Heart left ventricle (tissue), 16 donors: ENCODE measurements at regions of chr17 and their contacts with region 1.

Region 1: GRCh38 chr17:58172369-58173071 is 5.7 kb downstream of the OR4D2 start:
- DNase-seq: no peak
- ATAC-seq: no peak
- H3K4me3 ChIP-seq: no peak overlapping the region
- H3K27ac ChIP-seq: no peak overlapping the region
- H3K4me1 ChIP-seq: no peaks in the 10 kb centered on the region
- H3K27me3 ChIP-seq: peaks cover 0 to 38% (median 0%) of the 10 kb centered on the region in 9 donors
- CTCF ChIP-seq: peak in 9 of 12 donors; percentile 8 to 40 (median 36)
- POLR2A ChIP-seq: no peak

Region 2: GRCh38 chr17:57849874-57850754 is 322.4 kb before region 1 on chr17 and contains the start of gene MRPS23:
- intact Hi-C with region 1: no loop called
- DNase-seq: peak; percentile 98 to 99 (median 99)
- ATAC-seq: peak; percentile 74 to 91 (median 88)
- H3K4me3 ChIP-seq: peak within 1 kb of the TSS; percentile 57 to 98 (median 82)
- H3K27ac ChIP-seq: peak within 1 kb of the TSS; percentile 88 to 97 (median 94)
- H3K4me1 ChIP-seq: peaks cover 4 to 68% (median 35%) of the 10 kb centered on the region in 12 donors
- H3K27me3 ChIP-seq: no peaks in the 10 kb centered on the region
- CTCF ChIP-seq: no peak
- POLR2A ChIP-seq: peak; percentile 40 to 83
- total RNA-seq, gene MRPS23: 44.6 to 99.3 (median 71.8) TPM

Region 3: GRCh38 chr17:58096892-58097291 is 75.6 kb before region 1 on chr17:
- intact Hi-C with region 1: loop called in 1 of 10 experiments (anchors 2 kb)
- DNase-seq: no peak
- ATAC-seq: peak in 2 of 4 donors; percentile 20 to 25
- H3K4me3 ChIP-seq: no peak overlapping the region
- H3K27ac ChIP-seq: no peak overlapping the region
- H3K4me1 ChIP-seq: no peaks in the 10 kb centered on the region
- H3K27me3 ChIP-seq: no peaks in the 10 kb centered on the region
- CTCF ChIP-seq: no peak
- POLR2A ChIP-seq: no peak